ENCODE measurements at regions of chr3 and their contacts with region 1.

Region 1: DNA sequence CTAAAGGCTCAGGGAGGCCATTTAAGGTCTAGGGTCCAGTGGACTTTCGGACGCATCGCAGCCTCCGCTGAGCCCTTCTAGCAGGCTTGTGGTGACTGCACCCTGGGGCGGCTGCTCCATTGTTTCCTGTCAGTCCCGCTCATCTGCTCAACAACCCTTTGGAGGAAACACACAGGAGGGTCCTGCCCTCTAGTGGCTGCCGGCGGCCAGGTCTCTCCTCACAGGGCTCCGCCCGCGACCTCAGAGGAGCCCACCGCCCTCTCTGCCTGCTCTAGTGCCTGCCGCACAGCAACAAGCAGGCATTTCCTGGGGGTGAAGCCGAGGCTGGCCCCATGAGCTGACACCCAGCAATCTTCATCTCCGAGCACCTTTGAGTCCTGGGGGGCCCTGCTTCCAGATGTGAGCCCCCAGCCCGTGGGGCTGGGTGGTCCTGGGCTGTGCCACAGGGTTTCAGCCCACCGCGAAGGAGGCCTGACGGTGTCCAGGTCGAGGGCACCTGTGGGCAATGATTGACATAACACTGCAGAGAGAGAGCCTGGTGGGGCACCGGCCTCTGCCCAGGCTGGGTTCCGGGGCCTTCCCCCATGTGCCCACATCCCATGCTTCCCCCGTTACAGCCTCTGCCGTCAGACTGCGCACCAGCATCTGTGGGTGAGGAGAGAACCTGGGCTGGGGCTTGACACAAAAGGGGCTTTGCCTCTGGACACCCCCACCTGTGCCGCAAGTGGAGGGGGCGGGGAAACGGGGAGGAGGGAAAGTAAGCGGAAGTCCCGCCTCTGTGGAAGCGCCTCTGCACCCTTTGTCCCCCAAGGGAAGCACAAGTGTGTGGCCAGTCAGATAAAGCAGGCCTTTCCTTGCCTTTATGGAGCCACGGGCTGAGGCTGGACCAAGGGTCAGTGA is 27.0 kb upstream of the SFMBT1 start:
- DNase-seq: peak; percentile 78 to 96
- H3K4me3 ChIP-seq: peak overlapping the region; percentile 21 to 57 (median 32)
- H3K27ac ChIP-seq: no peak overlapping the region
- H3K4me1 ChIP-seq: peaks cover 0 to 15% (median 9%) of the 10 kb centered on the region in 4 experiments; a peak in 6 of 7 replicates
- H3K27me3 ChIP-seq: no peaks in the 10 kb centered on the region; a peak in 2 of 7 replicates
- CTCF ChIP-seq: peak in 2 of 3 experiments; percentile 90 to 99; a peak in 3 of 4 replicates
- EP300 ChIP-seq: no peak
- POLR2A ChIP-seq: peak in 1 of 2 experiments; percentile 34; a peak in 1 of 3 replicates
- RAD21 ChIP-seq: peak; percentile 93 to 94

Region 2: DNA sequence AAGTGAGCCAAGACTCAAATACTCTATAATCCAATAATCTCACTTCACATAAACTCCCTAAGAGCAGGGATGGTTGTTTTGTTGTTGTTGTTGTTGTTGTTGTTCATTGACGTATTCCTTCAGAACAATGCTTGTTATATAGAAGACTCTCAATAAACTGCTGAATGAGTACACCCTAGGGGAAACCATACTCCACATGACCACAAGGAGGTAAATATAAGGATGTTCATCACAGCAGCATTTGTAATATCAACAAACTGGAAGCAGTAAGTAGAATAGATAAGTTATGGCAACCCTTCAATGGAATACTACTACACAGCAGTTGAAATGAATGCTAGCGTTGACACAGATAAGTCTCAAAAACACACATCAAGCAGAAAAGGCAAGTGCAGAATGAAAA is 113.1 kb before region 1 on chr3:
- CTCF ChIA-PET with region 1: no interaction called
- POLR2A ChIA-PET with region 1: no interaction called
- DNase-seq: no peak
- H3K4me3 ChIP-seq: no peak overlapping the region
- H3K27ac ChIP-seq: no peak overlapping the region
- H3K4me1 ChIP-seq: no peaks in the 10 kb centered on the region
- H3K27me3 ChIP-seq: no peaks in the 10 kb centered on the region
- CTCF ChIP-seq: peak in 1 of 3 experiments; percentile 5; a peak in 1 of 4 replicates
- EP300 ChIP-seq: no peak
- POLR2A ChIP-seq: no peak
- RAD21 ChIP-seq: no peak

Region 3: DNA sequence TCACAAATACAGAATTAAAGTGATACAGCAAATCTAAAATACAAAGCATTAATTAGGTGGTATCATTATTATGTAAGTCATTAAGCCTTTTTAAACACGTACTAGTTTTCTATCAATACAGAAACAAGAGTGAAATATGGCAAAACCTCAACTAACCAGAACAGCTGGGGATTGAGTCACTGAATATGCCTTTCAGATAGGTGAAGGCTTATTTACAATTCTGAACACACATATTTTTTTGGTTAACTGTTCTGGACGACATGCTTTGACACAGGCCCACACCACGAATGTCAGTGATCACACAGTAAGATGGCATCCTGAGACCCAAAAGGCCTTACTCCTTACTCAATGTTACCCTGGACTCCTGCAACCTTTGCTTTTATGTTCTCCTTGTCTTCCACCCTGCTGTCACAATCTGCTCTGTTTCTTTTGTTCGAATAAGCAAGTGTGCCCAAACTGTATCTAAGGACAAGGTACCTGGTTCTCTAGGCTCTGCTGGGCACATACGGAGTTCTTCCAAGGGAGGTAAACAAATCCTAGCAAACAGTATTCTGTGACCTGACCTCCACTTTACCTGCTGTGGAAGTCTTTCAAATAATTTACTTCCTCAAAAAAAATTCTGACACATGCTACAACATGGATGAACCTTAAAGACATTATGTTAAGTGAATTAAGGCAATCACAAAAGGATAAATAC is 34.1 kb before region 1 on chr3:
- CTCF ChIA-PET with region 1: no interaction called
- POLR2A ChIA-PET with region 1: no interaction called
- DNase-seq: no peak
- H3K4me3 ChIP-seq: no peak overlapping the region
- H3K27ac ChIP-seq: no peak overlapping the region
- H3K4me1 ChIP-seq: peaks cover 0 to 3% (median 0%) of the 10 kb centered on the region in 4 experiments; a peak in 1 of 7 replicates
- H3K27me3 ChIP-seq: 0 out of 7 replicates have a peak, but pooled peaks cover 0 to 2% (median 0%) of the 10 kb centered on the region in 4 experiments
- CTCF ChIP-seq: no peak
- EP300 ChIP-seq: no peak
- POLR2A ChIP-seq: no peak
- RAD21 ChIP-seq: no peak

Region 4: DNA sequence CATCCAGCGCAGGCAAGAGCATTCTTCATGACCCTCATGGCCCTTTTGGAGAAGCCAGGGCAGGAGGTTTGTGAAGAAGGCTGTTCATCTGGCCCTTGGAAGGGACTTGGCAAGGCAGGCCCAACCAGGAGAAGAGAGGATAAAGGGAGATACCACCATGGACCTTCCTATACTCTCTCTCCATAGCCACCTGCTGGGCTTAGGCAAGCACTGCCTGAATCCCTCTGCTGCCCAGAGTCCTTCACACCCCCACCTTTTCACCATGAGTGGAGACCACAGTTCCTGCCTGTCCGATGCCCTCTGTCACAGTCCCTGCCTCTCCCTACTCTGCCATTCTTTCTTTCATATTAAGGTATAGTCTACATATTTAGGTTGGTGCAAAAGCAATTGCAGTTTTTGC is 16.5 kb before region 1 on chr3:
- CTCF ChIA-PET with region 1: interaction called, 11 read pairs
- POLR2A ChIA-PET with region 1: no interaction called
- DNase-seq: peak in 1 of 2 experiments; percentile 43
- H3K4me3 ChIP-seq: no peak overlapping the region
- H3K27ac ChIP-seq: no peak overlapping the region
- H3K4me1 ChIP-seq: no peaks in the 10 kb centered on the region
- H3K27me3 ChIP-seq: no peaks in the 10 kb centered on the region
- CTCF ChIP-seq: peak; percentile 15 to 36 (median 16); a peak in 3 of 4 replicates
- EP300 ChIP-seq: no peak
- POLR2A ChIP-seq: no peak
- RAD21 ChIP-seq: peak in 1 of 2 experiments; percentile 12; a peak in 2 of 4 replicates

Region 5: DNA sequence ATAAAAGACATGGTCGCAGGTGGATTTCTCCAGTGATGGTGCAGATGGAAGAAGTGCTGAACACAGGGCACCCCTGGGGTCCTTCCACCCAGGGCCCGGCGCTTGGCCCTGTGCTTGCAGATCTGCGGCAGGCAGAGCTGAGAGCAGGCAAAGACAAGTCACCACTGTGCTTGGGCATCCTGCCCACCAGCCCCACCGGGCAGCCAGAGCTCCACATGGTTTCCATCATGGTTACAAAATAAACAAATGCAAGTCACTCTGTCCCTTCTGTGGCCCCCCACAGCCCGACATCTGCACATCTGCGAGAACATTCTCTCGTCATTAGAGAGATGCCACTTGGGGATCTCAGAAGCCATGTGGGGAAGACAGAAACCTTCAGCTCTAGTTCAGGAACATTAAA is 10.6 kb after region 1 on chr3:
- CTCF ChIA-PET with region 1: interaction called, 6 read pairs
- POLR2A ChIA-PET with region 1: interaction called, 25 read pairs
- DNase-seq: no peak
- H3K4me3 ChIP-seq: no peak overlapping the region
- H3K27ac ChIP-seq: no peak overlapping the region
- H3K4me1 ChIP-seq: no peaks in the 10 kb centered on the region
- H3K27me3 ChIP-seq: no peaks in the 10 kb centered on the region
- CTCF ChIP-seq: no peak
- EP300 ChIP-seq: no peak
- POLR2A ChIP-seq: no peak
- RAD21 ChIP-seq: no peak

Region 6: DNA sequence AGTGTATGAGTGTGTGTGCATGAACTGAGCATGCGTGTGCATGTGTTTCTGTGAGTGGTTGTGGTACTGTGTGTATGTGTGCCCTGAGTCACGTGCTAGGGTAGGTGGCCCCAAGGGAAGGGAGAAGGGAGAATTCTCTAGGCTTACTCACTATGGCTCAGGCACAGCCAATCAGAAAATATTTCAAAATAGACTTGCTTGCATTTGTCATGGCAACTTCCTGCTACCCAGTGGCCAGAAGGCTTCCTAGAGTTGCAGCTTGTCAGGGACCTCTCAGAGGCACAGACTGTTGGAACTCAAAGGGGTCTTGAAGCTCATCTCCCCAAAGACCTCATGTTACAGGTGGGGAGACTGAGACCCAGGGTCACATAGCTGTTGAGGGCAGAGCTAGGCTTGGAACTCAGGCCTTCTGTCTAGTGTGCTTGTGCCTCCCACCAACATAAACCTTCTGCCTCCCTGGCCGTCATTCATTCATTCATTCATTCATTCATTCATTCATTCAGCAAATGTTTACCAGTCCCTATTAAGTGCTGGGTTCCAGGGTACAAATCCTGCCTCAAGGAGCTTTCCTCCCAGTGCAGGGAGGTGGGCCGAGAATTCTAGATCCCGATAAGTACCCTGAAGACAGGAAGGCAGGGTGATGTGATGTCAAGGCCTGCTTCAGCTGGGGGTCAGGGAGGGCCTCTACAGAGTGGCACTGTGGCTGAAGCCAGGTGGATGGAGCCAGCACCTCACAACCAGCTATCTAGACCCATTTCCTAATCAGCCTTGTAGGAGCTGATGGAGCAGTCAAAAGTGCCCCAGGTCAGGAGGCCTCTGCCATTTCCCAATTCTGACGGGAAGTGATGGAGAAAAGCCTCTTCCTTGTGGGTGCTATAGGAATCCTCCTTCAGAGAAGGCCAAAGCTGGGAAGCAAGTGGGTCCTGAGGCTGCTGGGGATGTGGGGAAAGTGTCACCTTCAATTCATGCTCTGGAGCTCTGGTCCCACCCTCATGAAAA is 68.2 kb after region 1 on chr3:
- CTCF ChIA-PET with region 1: no interaction called
- POLR2A ChIA-PET with region 1: no interaction called
- DNase-seq: no peak
- H3K4me3 ChIP-seq: no peak overlapping the region
- H3K27ac ChIP-seq: no peak overlapping the region
- H3K4me1 ChIP-seq: no peaks in the 10 kb centered on the region; a peak in 1 of 7 replicates
- H3K27me3 ChIP-seq: no peaks in the 10 kb centered on the region
- CTCF ChIP-seq: no peak
- EP300 ChIP-seq: no peak
- POLR2A ChIP-seq: no peak
- RAD21 ChIP-seq: no peak

Region 7: GRCh38 chr3:53337167-53337940 is 264.5 kb after region 1 on chr3:
- CTCF ChIA-PET with region 1: no interaction called
- POLR2A ChIA-PET with region 1: no interaction called
- DNase-seq: no peak
- H3K4me3 ChIP-seq: no peak overlapping the region
- H3K27ac ChIP-seq: no peak overlapping the region
- H3K4me1 ChIP-seq: no peaks in the 10 kb centered on the region
- H3K27me3 ChIP-seq: no peaks in the 10 kb centered on the region
- CTCF ChIP-seq: no peak
- EP300 ChIP-seq: no peak
- POLR2A ChIP-seq: no peak
- RAD21 ChIP-seq: no peak